A673 (cell line): ENCODE measurements at regions of chr5 and their contacts with region 1.

Region 1: DNA sequence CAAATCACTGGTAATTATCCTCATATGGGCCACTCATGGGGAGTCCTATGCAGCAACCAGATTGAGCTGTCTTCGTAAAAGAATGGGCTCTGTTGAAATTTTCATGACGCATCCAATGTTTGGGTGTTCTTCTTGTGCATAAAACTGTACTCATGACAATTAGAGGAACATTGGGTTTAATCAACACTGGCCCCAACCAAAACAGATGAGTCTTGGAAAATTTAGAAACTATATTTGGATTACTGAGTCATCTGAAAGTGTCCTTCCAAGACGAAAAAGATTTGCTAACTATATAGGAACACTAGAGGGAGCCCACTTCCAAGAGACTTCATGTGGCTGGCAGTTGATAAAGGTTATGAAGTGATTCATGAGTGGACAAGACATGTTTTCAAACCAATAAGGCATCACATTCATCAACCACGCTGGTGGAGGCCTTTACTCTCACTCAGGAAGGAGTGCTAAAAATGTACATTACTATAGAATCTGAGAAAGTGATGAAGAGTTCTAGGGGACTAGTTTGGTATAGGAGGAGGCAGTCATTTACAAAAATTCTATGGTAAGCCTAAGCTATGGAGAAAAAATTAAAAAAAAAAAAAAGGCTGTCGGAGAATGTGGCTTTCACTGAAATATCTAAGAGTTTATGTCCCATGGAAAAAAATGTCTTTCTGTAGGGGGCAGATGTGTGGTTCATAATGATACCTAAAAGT is 313.5 kb downstream of the PRDM9 start:
- DNase-seq: peak; percentile 69
- H3K4me3 ChIP-seq: no peak overlapping the region
- H3K27ac ChIP-seq: no peak overlapping the region
- H3K4me1 ChIP-seq: no peaks in the 10 kb centered on the region
- H3K27me3 ChIP-seq: no peaks in the 10 kb centered on the region
- CTCF ChIP-seq: peak; percentile 74

Region 2: GRCh38 chr5:23977997-23978396 is 157.1 kb after region 1 on chr5:
- CTCF ChIA-PET with region 1: no interaction called
- POLR2A ChIA-PET with region 1: no interaction called
- intact Hi-C with region 1: no loop called
- DNase-seq: peak; percentile 60
- H3K4me3 ChIP-seq: no peak overlapping the region
- H3K27ac ChIP-seq: no peak overlapping the region
- H3K4me1 ChIP-seq: no peaks in the 10 kb centered on the region
- H3K27me3 ChIP-seq: no peaks in the 10 kb centered on the region
- CTCF ChIP-seq: peak; percentile 54

Region 3: GRCh38 chr5:23994581-23995370 is 173.9 kb after region 1 on chr5:
- CTCF ChIA-PET with region 1: no interaction called
- POLR2A ChIA-PET with region 1: no interaction called
- intact Hi-C with region 1: loop called (anchors 5 kb)
- DNase-seq: peak; percentile 15
- H3K4me3 ChIP-seq: no peak overlapping the region
- H3K27ac ChIP-seq: no peak overlapping the region
- H3K4me1 ChIP-seq: no peaks in the 10 kb centered on the region
- H3K27me3 ChIP-seq: no peaks in the 10 kb centered on the region
- CTCF ChIP-seq: peak; percentile 51